Mammary epithelial cell (primary cell): ENCODE measurements at regions of chr3 and their contacts with region 1.

Region 1: GRCh38 chr3:196721097-196721496 is 8.9 kb downstream of the PIGX start:
- DNase-seq: no peak
- H3K4me3 ChIP-seq: no peak overlapping the region
- H3K27ac ChIP-seq: no peak overlapping the region
- H3K4me1 ChIP-seq: no peaks in the 10 kb centered on the region
- H3K27me3 ChIP-seq: no peaks in the 10 kb centered on the region
- CTCF ChIP-seq: no peak

Region 2: DNA sequence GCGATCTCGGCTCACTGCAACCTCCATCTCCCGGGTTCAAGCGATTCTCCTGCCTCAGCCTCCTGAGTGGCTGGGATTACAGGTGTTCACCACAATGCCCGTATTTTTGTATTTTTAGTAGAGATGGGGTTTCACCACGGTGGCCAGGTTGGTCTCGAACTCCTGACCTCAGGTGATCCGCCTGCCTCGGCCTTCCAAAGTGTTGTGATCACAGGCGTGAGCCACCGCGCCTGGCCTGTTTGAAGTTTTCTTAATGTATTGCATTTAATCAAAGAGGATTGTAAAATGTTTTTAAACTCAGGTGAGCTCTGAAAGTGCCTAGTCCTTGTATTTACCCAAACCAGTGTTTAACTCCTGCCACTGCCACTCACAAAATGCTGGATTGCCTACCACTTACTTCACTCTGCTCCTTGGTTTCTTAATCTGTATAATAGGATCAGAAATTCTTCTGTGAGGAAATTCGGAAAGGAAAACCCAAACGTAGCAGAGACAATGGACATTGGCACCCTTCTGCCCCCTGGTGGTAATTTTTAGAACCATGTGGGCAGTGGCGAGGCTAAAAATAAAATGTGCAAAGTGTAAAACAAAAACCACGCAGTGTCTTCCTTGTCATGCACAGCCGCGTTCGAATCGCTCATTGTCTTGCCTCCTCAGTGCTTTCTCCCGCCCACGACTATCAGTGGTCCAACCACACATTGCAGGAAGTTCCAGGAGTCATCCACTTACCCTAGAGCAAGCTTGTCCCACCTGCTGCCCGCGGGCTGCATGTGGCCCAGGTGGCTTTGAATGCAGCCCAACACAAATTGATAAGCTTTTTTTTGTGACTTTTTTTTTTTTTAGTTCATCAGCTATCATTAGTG is 36.3 kb before region 1 on chr3:
- CTCF ChIA-PET with region 1: no interaction called
- dilution Hi-C with region 1: no loop called
- in situ Hi-C with region 1: no loop called
- intact Hi-C with region 1: no loop called
- DNase-seq: peak; percentile 35
- H3K4me3 ChIP-seq: no peak overlapping the region
- H3K27ac ChIP-seq: no peak overlapping the region
- H3K4me1 ChIP-seq: peaks cover 4% of the 10 kb centered on the region
- H3K27me3 ChIP-seq: no peaks in the 10 kb centered on the region
- CTCF ChIP-seq: peak; percentile 71 to 84

Region 3: GRCh38 chr3:196821806-196822355 is 100.8 kb after region 1 on chr3:
- CTCF ChIA-PET with region 1: no interaction called
- dilution Hi-C with region 1: loop called (anchors 5 kb)
- in situ Hi-C with region 1: no loop called
- intact Hi-C with region 1: no loop called
- DNase-seq: no peak
- H3K4me3 ChIP-seq: no peak overlapping the region
- H3K27ac ChIP-seq: no peak overlapping the region
- H3K4me1 ChIP-seq: no peaks in the 10 kb centered on the region
- H3K27me3 ChIP-seq: no peaks in the 10 kb centered on the region
- CTCF ChIP-seq: no peak